Naive thymus-derived CD4-positive, alpha-beta T cell (primary cell): ENCODE measurements at regions of chr5 and their contacts with region 1.

Region 1: GRCh38 chr5:138503487-138504270 is 38.4 kb downstream of the EGR1 start:
- DNase-seq: peak in 7 of 9 donors; percentile 30 to 60 (median 49)
- ATAC-seq: peak; percentile 82
- H3K4me3 ChIP-seq: no peak overlapping the region
- H3K4me3 Mint-ChIP-seq: no peak overlapping the region
- H3K27ac ChIP-seq: no peak overlapping the region
- H3K27ac Mint-ChIP-seq: peak overlapping the region in 3 of 9 donors; percentile 9 to 47 (median 32)
- H3K4me1 ChIP-seq: no peaks in the 10 kb centered on the region
- H3K4me1 Mint-ChIP-seq: peaks cover 0 to 5% (median 3%) of the 10 kb centered on the region in 7 donors
- H3K27me3 ChIP-seq: no peaks in the 10 kb centered on the region
- H3K27me3 Mint-ChIP-seq: no peaks in the 10 kb centered on the region

Region 2: DNA sequence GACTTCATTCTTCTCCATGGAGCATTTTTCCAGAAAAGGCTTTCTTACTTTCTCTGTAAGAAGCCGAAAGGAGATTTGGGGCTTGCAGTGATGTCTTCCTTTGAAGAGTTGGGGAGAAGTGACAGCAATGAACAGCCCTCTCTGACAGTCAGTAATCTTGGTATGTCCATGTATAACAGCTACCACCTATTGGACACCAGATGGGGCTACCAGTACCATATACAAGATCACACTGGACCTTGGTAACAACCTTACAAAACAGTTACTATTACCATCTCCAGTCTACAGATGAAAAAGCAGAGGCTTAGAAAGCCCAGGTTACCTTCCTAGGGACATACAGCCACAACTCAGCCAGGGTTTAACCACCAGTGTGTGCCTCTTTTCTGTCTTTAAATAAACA is 1865.6 kb before region 1 on chr5:
- CTCF ChIA-PET with region 1: no interaction called
- POLR2A ChIA-PET with region 1: no interaction called
- intact Hi-C with region 1: no loop called
- DNase-seq: no peak
- ATAC-seq: no peak
- H3K4me3 ChIP-seq: no peak overlapping the region
- H3K4me3 Mint-ChIP-seq: no peak overlapping the region
- H3K27ac ChIP-seq: no peak overlapping the region
- H3K27ac Mint-ChIP-seq: no peak overlapping the region
- H3K4me1 ChIP-seq: no peaks in the 10 kb centered on the region
- H3K4me1 Mint-ChIP-seq: no peaks in the 10 kb centered on the region
- H3K27me3 ChIP-seq: no peaks in the 10 kb centered on the region
- H3K27me3 Mint-ChIP-seq: peaks cover 0 to 4% (median 0%) of the 10 kb centered on the region in 5 donors

Region 3: DNA sequence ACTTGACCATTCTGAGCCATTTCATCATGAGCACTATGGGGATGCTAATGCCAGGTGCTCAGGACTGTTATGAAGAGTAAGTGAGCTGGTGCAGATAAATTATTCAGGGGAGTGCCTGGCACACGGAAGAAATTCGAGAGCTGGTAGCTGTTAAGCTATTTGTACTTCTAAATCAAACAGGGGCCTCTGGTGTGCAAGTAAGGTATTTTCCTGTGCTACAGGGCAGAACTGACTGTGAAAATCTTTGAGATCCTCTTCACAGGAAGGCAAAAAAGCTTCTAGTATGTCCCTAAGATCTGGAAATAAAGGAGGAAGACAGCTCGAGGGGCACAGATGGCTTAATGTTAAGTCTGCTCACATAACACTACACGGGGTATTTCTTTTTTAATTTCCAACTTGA is 898.3 kb before region 1 on chr5:
- CTCF ChIA-PET with region 1: no interaction called
- POLR2A ChIA-PET with region 1: no interaction called
- intact Hi-C with region 1: no loop called
- DNase-seq: no peak
- ATAC-seq: no peak
- H3K4me3 ChIP-seq: no peak overlapping the region
- H3K4me3 Mint-ChIP-seq: no peak overlapping the region
- H3K27ac ChIP-seq: no peak overlapping the region
- H3K27ac Mint-ChIP-seq: no peak overlapping the region
- H3K4me1 ChIP-seq: no peaks in the 10 kb centered on the region
- H3K4me1 Mint-ChIP-seq: peaks cover 0 to 1% (median 0%) of the 10 kb centered on the region in 7 donors
- H3K27me3 ChIP-seq: no peaks in the 10 kb centered on the region
- H3K27me3 Mint-ChIP-seq: peaks cover 6 to 53% (median 21%) of the 10 kb centered on the region in 5 donors

Region 4: DNA sequence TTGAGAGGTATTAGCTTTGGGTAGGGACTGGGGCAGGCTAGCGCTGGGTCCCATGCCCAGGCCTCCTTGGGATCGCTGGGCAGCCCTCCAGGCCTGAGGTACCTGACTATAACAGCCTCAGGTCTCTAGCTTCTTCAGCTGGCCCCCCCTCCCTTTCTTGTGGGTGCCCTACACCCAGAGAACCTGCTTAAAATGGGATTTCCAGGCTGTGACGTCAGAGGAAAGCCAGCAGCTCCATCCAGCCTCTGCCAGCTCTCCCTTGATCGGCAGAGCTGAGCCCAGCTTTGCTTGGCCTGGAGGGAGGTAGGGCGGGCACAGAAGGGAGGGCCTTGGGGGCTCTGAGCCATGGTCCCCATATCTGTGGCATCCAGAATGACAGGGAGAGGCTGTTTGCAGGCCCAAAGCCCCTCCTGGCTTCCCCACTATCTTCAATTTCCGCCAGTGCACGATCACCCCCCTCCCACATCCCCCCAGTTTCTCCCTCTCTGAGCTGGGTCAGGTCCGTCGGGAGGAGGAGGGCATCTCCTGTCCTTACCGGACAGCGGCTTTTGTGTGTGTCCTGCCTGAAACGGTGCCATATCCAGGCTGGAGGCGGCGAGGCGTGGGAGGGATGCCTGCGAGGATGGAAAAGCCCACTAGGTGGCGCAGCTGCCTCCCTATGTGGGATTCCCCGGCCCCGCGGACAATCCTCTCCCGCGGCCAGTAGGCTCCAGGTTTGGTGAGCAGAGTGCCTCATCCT is 54.0 kb before region 1 on chr5:
- CTCF ChIA-PET with region 1: interaction called, 91 read pairs
- POLR2A ChIA-PET with region 1: interaction called, 9 read pairs
- intact Hi-C with region 1: loop called (anchors 1 kb)
- DNase-seq: peak; percentile 24 to 89 (median 60)
- ATAC-seq: peak; percentile 91
- H3K4me3 ChIP-seq: no peak overlapping the region
- H3K4me3 Mint-ChIP-seq: peak overlapping the region in 4 of 10 donors; percentile 33 to 54 (median 46)
- H3K27ac ChIP-seq: no peak overlapping the region
- H3K27ac Mint-ChIP-seq: no peak overlapping the region
- H3K4me1 ChIP-seq: peaks cover 7% of the 10 kb centered on the region in 2 donors
- H3K4me1 Mint-ChIP-seq: peaks cover 0 to 9% (median 6%) of the 10 kb centered on the region in 7 donors
- H3K27me3 ChIP-seq: no peaks in the 10 kb centered on the region
- H3K27me3 Mint-ChIP-seq: peaks cover 0 to 3% (median 0%) of the 10 kb centered on the region in 5 donors

Region 5: DNA sequence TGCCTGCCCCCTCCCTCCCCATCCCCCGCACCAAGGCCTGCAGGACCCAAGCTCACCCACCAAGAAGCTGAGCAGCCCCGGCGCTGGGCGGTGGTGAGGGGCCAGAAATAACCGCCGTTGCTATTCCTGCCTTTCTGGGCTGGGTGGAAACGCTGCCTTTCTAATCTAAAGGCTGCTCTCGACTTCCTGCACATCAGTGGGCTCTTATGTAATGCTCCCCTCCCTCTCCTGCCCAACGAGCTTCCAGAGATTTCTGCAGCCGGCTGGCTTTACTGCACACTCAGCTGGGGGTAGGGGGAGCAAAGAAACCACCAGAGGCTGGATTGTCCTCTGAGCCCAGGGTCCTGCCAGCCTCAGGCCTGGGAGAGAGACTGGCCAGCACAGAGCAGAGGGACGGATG is 45.3 kb before region 1 on chr5:
- CTCF ChIA-PET with region 1: interaction called, 10 read pairs
- POLR2A ChIA-PET with region 1: interaction called, 8 read pairs
- intact Hi-C with region 1: no loop called
- DNase-seq: peak in 1 of 9 donors; percentile 19
- ATAC-seq: no peak
- H3K4me3 ChIP-seq: no peak overlapping the region
- H3K4me3 Mint-ChIP-seq: peak overlapping the region in 7 of 10 donors; percentile 34 to 88 (median 66)
- H3K27ac ChIP-seq: peak overlapping the region; percentile 49
- H3K27ac Mint-ChIP-seq: peak overlapping the region; percentile 90 to 99 (median 97)
- H3K4me1 ChIP-seq: peaks cover 22 to 31% of the 10 kb centered on the region in 2 donors
- H3K4me1 Mint-ChIP-seq: peaks cover 22 to 48% (median 40%) of the 10 kb centered on the region in 7 donors
- H3K27me3 ChIP-seq: no peaks in the 10 kb centered on the region
- H3K27me3 Mint-ChIP-seq: no peaks in the 10 kb centered on the region

Region 6: DNA sequence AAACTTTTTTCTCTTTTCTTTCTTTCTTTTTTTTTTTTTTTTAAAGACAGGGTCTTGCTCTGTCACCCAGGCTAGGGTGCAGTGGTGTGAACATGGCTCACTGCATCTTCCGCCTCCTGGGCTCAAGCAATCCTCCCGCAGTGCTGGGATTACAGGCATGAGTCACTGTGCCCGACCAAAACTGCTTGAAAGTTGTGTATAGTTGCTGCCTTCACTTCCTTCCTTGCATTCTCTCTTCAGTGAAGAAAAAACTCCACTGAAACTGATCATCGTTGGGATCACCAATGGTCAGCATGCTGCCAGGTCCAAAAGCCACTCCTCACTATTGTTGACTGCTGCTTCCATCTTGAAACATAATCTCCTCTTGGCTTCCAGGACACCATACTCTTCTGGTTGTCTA is 183.0 kb after region 1 on chr5:
- CTCF ChIA-PET with region 1: no interaction called
- POLR2A ChIA-PET with region 1: no interaction called
- intact Hi-C with region 1: no loop called
- DNase-seq: no peak
- ATAC-seq: no peak
- H3K4me3 ChIP-seq: no peak overlapping the region
- H3K4me3 Mint-ChIP-seq: no peak overlapping the region
- H3K27ac ChIP-seq: no peak overlapping the region
- H3K27ac Mint-ChIP-seq: no peak overlapping the region
- H3K4me1 ChIP-seq: no peaks in the 10 kb centered on the region
- H3K4me1 Mint-ChIP-seq: peaks cover 0 to 1% (median 0%) of the 10 kb centered on the region in 7 donors
- H3K27me3 ChIP-seq: peaks cover 0 to 6% of the 10 kb centered on the region in 2 donors
- H3K27me3 Mint-ChIP-seq: peaks cover 46 to 66% (median 54%) of the 10 kb centered on the region in 5 donors